ENCODE measurements at regions of chr14 and their contacts with region 1.

Region 1: GRCh38 chr14:59438195-59438647 is 27.0 kb downstream of the GPR135 start:
- DNase-seq: no peak
- ATAC-seq: no peak
- H3K4me3 ChIP-seq: no peak overlapping the region
- H3K4me3 Mint-ChIP-seq: no peak overlapping the region
- H3K27ac ChIP-seq: no peak overlapping the region
- H3K27ac Mint-ChIP-seq: no peak overlapping the region
- H3K4me1 ChIP-seq: no peaks in the 10 kb centered on the region
- H3K4me1 Mint-ChIP-seq: no peaks in the 10 kb centered on the region
- H3K27me3 ChIP-seq: no peaks in the 10 kb centered on the region
- H3K27me3 Mint-ChIP-seq: peaks cover 0 to 5% (median 0%) of the 10 kb centered on the region in 5 donors

Region 2: GRCh38 chr14:59028476-59029202 is 409.6 kb before region 1 on chr14:
- CTCF ChIA-PET with region 1: no interaction called
- POLR2A ChIA-PET with region 1: no interaction called
- intact Hi-C with region 1: loop called in 1 of 2 experiments (anchors 5 kb)
- DNase-seq: peak in 5 of 9 donors; percentile 5 to 25 (median 14)
- ATAC-seq: peak; percentile 65
- H3K4me3 ChIP-seq: no peak overlapping the region
- H3K4me3 Mint-ChIP-seq: peak overlapping the region in 3 of 10 donors; percentile 13 to 40 (median 29)
- H3K27ac ChIP-seq: no peak overlapping the region
- H3K27ac Mint-ChIP-seq: peak overlapping the region in 1 of 9 donors; percentile 47
- H3K4me1 ChIP-seq: no peaks in the 10 kb centered on the region
- H3K4me1 Mint-ChIP-seq: peaks cover 0 to 8% (median 2%) of the 10 kb centered on the region in 7 donors
- H3K27me3 ChIP-seq: no peaks in the 10 kb centered on the region
- H3K27me3 Mint-ChIP-seq: peaks cover 0 to 11% (median 4%) of the 10 kb centered on the region in 5 donors

Measured in naive thymus-derived CD4-positive, alpha-beta T cell (primary cell).